Posterior cingulate gyrus (tissue), 11 donors: ENCODE measurements at regions of chr22 and their contacts with region 1.

Region 1: GRCh38 chr22:43412808-43413795 is 1.3 kb downstream of the MPPED1 start:
- DNase-seq: peak in 3 of 10 donors; percentile 75 to 87 (median 85)

Region 2: GRCh38 chr22:43455846-43456245 is 42.7 kb after region 1 on chr22:
- intact Hi-C with region 1: no loop called
- DNase-seq: no peak

Region 3: DNA sequence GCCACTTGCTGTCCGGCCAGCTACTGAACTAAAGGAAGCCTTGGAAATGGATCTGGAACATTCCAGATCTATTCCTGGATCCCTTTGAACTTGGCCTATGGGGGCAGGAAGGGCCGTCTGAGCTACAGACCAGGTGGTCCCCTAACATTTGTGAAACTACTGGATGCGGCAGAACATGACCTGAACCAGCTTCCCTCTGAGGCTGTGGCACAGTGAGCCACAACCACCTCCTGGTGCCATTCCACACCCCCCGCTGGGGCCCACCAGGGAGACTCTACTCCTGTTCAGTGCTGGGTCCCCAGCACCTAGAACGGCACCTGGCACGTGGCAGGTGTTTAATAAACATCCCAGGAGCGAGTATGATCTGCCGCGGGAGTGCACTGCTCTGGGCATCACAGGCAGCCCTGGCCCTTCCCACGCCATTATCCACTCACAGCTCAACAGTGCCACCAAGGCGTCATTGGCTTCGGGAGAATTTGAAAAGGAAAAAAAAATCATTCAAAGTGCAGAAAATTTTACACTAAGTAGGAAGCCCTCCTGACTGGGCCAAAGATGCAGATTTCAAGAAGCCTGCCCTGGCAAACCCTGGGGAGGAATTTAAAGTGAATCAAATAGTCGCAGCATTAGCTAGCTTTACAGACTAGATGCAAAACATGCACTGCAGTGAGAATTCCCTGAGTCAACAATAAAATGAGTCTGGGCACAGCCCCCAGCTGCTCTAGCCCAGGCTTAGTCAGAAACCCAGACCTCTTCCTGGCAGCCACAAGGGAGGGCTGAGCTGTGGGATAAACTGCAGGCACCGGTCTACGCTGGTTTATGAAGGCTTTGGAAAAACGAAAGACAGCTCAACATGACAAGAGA is 413.3 kb after region 1 on chr22:
- intact Hi-C with region 1: loop called (anchors 10 kb)
- DNase-seq: peak in 7 of 10 donors; percentile 43 to 92 (median 63)